Pancreas (tissue), 10 donors: ENCODE measurements at regions of chr12 and their contacts with region 1.

Region 1: GRCh38 chr12:59087077-59087673 is 166.9 kb upstream of the LRIG3 start:
- DNase-seq: no peak
- ATAC-seq: peak; percentile 76 to 88 (median 84)
- H3K4me3 ChIP-seq: no peak overlapping the region
- H3K27ac ChIP-seq: no peak overlapping the region
- H3K4me1 ChIP-seq: peaks cover 0 to 4% (median 4%) of the 10 kb centered on the region in 3 donors
- H3K27me3 ChIP-seq: no peaks in the 10 kb centered on the region
- CTCF ChIP-seq: peak in 3 of 4 donors; percentile 23 to 59 (median 46)

Region 2: GRCh38 chr12:58529897-58530741 is 557.1 kb before region 1 on chr12:
- intact Hi-C with region 1: loop called in 1 of 3 experiments (anchors 10 kb)
- DNase-seq: no peak
- ATAC-seq: peak in 2 of 4 donors; percentile 51 to 67
- H3K4me3 ChIP-seq: no peak overlapping the region
- H3K27ac ChIP-seq: no peak overlapping the region
- H3K4me1 ChIP-seq: no peaks in the 10 kb centered on the region
- H3K27me3 ChIP-seq: no peaks in the 10 kb centered on the region
- CTCF ChIP-seq: no peak

Region 3: DNA sequence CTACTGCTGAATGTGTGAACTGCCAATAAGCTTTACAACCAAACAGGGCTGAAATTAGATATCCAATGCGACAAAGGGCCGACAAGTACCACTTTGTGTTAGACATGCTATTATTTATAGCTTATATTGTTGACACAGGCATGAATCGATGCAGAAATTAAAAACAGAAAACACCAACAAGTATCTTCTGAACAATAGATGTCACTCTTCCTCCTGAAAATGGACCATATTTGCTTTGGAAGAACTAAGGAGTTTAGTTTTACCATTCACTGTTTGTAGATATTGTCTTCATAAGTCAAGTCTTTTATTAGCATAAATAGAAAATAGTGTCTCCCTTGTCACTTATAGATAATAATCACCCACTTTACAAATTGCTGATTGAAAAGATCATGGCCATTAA is 253.3 kb before region 1 on chr12:
- intact Hi-C with region 1: loop called in 1 of 3 experiments (anchors 10 kb)
- DNase-seq: no peak
- ATAC-seq: peak in 1 of 4 donors; percentile 66
- H3K4me3 ChIP-seq: no peak overlapping the region
- H3K27ac ChIP-seq: no peak overlapping the region
- H3K4me1 ChIP-seq: no peaks in the 10 kb centered on the region
- H3K27me3 ChIP-seq: no peaks in the 10 kb centered on the region
- CTCF ChIP-seq: no peak

Region 4: DNA sequence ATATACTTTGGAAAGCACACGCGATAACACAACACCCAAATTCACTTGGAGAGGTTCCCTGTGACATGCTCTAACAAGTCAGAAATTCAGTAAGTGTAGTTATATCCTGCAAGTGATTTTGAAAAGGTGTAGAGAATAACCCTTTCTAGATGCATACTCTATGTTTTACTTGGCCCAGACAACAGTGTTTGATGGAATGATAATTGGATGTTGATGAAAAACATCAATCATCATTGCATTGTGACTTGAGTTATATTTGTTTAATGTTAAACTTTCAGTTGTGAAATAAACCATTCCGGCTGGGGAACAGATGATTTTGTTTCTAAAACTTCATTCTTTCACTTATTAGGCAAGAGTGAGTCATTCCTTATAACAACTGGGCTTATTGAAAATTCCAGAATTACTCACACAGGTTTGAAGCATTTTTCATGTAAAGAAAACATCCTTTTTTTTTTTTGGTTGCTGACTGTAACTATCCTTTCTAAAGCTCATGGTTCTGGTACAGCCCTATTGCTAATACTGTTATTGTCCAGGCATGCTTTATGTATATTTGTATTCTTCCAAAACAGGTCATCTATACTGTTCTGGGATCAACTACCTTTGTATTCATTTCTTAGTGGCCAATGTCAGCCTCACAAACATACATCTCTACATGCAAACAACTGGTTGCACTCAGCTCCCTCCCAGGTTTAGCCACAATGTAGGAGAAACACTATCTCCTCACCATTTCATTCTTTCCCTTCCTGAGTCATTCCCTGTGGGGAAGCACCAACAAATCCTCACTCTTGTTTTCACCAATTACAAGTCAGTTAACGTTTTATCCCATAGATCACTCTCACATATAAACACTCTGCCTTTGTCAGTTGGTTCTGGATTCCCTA is 45.7 kb before region 1 on chr12:
- intact Hi-C with region 1: no loop called
- DNase-seq: no peak
- ATAC-seq: peak; percentile 48 to 74 (median 61)
- H3K4me3 ChIP-seq: no peak overlapping the region
- H3K27ac ChIP-seq: peak overlapping the region in 1 of 4 donors; percentile 40
- H3K4me1 ChIP-seq: peaks cover 0 to 15% (median 12%) of the 10 kb centered on the region in 3 donors
- H3K27me3 ChIP-seq: no peaks in the 10 kb centered on the region
- CTCF ChIP-seq: no peak

Region 5: DNA sequence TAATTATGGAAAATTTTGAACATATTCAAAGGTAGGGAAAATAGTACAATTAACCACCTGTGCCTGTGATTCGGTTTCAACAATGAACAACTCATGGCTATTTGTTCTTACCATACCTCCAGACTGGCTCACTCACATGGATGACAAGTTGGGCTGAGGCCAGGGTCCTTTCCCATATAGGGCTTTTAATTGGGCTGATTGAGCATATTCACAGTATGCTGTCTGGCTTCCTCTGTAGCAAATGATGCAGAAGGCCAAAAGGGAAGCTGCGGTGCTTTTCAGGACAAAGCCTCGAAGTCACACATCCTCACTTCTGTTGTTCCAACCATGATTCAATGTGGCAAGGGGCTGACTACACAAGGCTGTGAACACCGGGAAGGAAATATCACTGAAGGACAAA is 211.1 kb after region 1 on chr12:
- intact Hi-C with region 1: no loop called
- DNase-seq: no peak
- ATAC-seq: no peak
- H3K4me3 ChIP-seq: no peak overlapping the region
- H3K27ac ChIP-seq: no peak overlapping the region
- H3K4me1 ChIP-seq: no peaks in the 10 kb centered on the region
- H3K27me3 ChIP-seq: no peaks in the 10 kb centered on the region
- CTCF ChIP-seq: no peak